T-cell (primary cell): ENCODE measurements at regions of chr14 and their contacts with region 1.

Region 1: GRCh38 chr14:45144658-45145057 is 8.9 kb downstream of the FANCM start:
- DNase-seq: no peak
- ATAC-seq: no peak
- H3K4me3 ChIP-seq: no peak overlapping the region
- H3K4me3 Mint-ChIP-seq: no peak overlapping the region
- H3K27ac ChIP-seq: no peak overlapping the region
- H3K27ac Mint-ChIP-seq: no peak overlapping the region
- H3K4me1 ChIP-seq: no peaks in the 10 kb centered on the region
- H3K4me1 Mint-ChIP-seq: peaks cover 6 to 8% (median 7%) of the 10 kb centered on the region in 3 donors
- H3K27me3 ChIP-seq: no peaks in the 10 kb centered on the region
- H3K27me3 Mint-ChIP-seq: no peaks in the 10 kb centered on the region

Region 2: GRCh38 chr14:45134051-45134958 is 10.4 kb before region 1 on chr14 and contains the start of gene FKBP3:
- CTCF ChIA-PET with region 1: interaction called in 1 of 2 experiments, 4 read pairs
- POLR2A ChIA-PET with region 1: interaction called in 1 of 2 experiments, 14 read pairs
- DNase-seq: peak; percentile 89 to 98 (median 96)
- ATAC-seq: peak; percentile 90 to 97 (median 93)
- H3K4me3 ChIP-seq: peak within 1 kb of the TSS; percentile 76 to 94
- H3K4me3 Mint-ChIP-seq: peak within 1 kb of the TSS; percentile 96 to 99 (median 98)
- H3K27ac ChIP-seq: peak within 1 kb of the TSS; percentile 92
- H3K27ac Mint-ChIP-seq: peak within 1 kb of the TSS; percentile 97 to 99
- H3K4me1 ChIP-seq: peaks cover 19 to 29% of the 10 kb centered on the region in 2 experiments
- H3K4me1 Mint-ChIP-seq: peaks cover 53 to 56% (median 55%) of the 10 kb centered on the region in 3 donors
- H3K27me3 ChIP-seq: no peaks in the 10 kb centered on the region
- H3K27me3 Mint-ChIP-seq: no peaks in the 10 kb centered on the region
- total RNA-seq, gene FKBP3: 33.8 to 49.3 (median 45.2) TPM

Region 3: GRCh38 chr14:45212231-45212630 is 67.6 kb after region 1 on chr14:
- CTCF ChIA-PET with region 1: no interaction called
- POLR2A ChIA-PET with region 1: interaction called in 1 of 2 experiments, 17 read pairs
- DNase-seq: no peak
- ATAC-seq: no peak
- H3K4me3 ChIP-seq: no peak overlapping the region
- H3K4me3 Mint-ChIP-seq: no peak overlapping the region
- H3K27ac ChIP-seq: no peak overlapping the region
- H3K27ac Mint-ChIP-seq: no peak overlapping the region
- H3K4me1 ChIP-seq: no peaks in the 10 kb centered on the region
- H3K4me1 Mint-ChIP-seq: no peaks in the 10 kb centered on the region
- H3K27me3 ChIP-seq: no peaks in the 10 kb centered on the region
- H3K27me3 Mint-ChIP-seq: no peaks in the 10 kb centered on the region